Activated B cell treated with CpG ODN at 0.5 μM for 24 hours (primary cell): ENCODE measurements at regions of chr19 and their contacts with region 1.

Region 1: DNA sequence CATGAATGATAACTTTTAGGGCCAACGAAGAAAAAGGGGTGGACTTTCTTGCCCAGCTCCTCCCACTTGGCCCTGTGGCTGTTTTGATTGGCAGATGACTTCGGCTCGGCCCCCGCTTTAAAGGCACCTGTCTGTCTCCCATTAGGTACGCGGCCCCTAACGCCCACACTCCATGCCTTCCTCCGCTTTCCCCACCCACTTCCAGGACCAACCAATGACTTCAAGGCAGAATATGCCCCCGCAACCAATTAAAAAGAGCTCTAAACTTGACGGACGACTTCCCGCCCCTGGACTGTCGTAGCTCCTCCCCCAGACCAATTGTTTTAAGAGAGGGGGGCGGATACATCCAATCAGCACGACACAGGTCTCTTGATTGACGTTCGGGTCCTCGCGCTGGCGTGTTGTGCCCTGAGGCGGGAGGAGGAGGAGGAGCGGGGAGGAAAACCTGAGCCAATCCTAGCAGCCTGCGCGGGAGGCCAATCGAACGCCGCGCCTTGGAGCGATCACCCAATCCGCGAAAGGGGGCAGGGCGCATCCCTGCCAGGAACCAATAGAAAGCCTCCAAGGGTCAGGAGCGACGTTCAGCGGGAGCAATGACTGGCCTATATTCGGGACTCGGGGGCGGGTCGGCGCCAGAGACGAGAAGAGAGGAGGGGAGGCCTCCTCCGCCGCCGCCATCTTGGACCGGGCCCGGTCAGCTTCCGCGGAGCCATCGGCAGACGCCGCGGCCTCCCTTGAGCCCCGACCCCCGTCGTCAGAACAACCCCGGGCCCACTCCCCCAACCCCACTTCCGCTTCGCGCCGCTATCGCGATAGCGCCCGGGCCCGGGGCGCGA is at the start of gene CNOT3:
- DNase-seq: peak; percentile 92
- ATAC-seq: peak; percentile 80
- H3K4me3 Mint-ChIP-seq: peak within 1 kb of the TSS; percentile 85
- H3K27ac Mint-ChIP-seq: peak within 1 kb of the TSS; percentile 90
- H3K4me1 Mint-ChIP-seq: peaks cover 51% of the 10 kb centered on the region
- H3K27me3 Mint-ChIP-seq: no peaks in the 10 kb centered on the region
- CTCF ChIP-seq: no peak
- total RNA-seq, gene CNOT3: 53.2 and 64.6 TPM in 2 replicates

Region 2: GRCh38 chr19:53844849-53845246 is 292.5 kb before region 1 on chr19:
- CTCF ChIA-PET with region 1: no interaction called
- POLR2A ChIA-PET with region 1: no interaction called
- intact Hi-C with region 1: loop called (anchors 1 kb)
- DNase-seq: no peak
- ATAC-seq: no peak
- H3K4me3 Mint-ChIP-seq: no peak overlapping the region
- H3K27ac Mint-ChIP-seq: no peak overlapping the region
- H3K4me1 Mint-ChIP-seq: peaks cover 7% of the 10 kb centered on the region
- H3K27me3 Mint-ChIP-seq: peaks cover 20% of the 10 kb centered on the region
- CTCF ChIP-seq: no peak

Region 3: GRCh38 chr19:54102421-54103169 is 34.7 kb before region 1 on chr19 and contains the start of gene NDUFA3:
- CTCF ChIA-PET with region 1: no interaction called
- POLR2A ChIA-PET with region 1: interaction called, 22 read pairs
- intact Hi-C with region 1: loop called (anchors 1 kb)
- DNase-seq: peak; percentile 93
- ATAC-seq: peak; percentile 97
- H3K4me3 Mint-ChIP-seq: peak within 1 kb of the TSS; percentile 99
- H3K27ac Mint-ChIP-seq: peak within 1 kb of the TSS; percentile 93
- H3K4me1 Mint-ChIP-seq: peaks cover 15% of the 10 kb centered on the region
- H3K27me3 Mint-ChIP-seq: no peaks in the 10 kb centered on the region
- CTCF ChIP-seq: no peak
- total RNA-seq, gene NDUFA3: 94.7 and 96.1 TPM in 2 replicates

Region 4: GRCh38 chr19:54152265-54152664 is 15.0 kb after region 1 on chr19:
- CTCF ChIA-PET with region 1: no interaction called
- POLR2A ChIA-PET with region 1: interaction called, 69 read pairs
- intact Hi-C with region 1: no loop called
- DNase-seq: no peak
- ATAC-seq: no peak
- H3K4me3 Mint-ChIP-seq: no peak overlapping the region
- H3K27ac Mint-ChIP-seq: no peak overlapping the region
- H3K4me1 Mint-ChIP-seq: peaks cover 2% of the 10 kb centered on the region
- H3K27me3 Mint-ChIP-seq: no peaks in the 10 kb centered on the region
- CTCF ChIP-seq: no peak

Region 5: GRCh38 chr19:54203151-54203611 is 65.9 kb after region 1 on chr19:
- CTCF ChIA-PET with region 1: no interaction called
- POLR2A ChIA-PET with region 1: interaction called, 30 read pairs
- intact Hi-C with region 1: loop called (anchors 2 kb)
- DNase-seq: no peak
- ATAC-seq: no peak
- H3K4me3 Mint-ChIP-seq: peak overlapping the region; percentile 100
- H3K27ac Mint-ChIP-seq: peak overlapping the region; percentile 24
- H3K4me1 Mint-ChIP-seq: peaks cover 82% of the 10 kb centered on the region
- H3K27me3 Mint-ChIP-seq: no peaks in the 10 kb centered on the region
- CTCF ChIP-seq: no peak

Region 6: GRCh38 chr19:55385740-55386529 is 1248.6 kb after region 1 on chr19 and contains the start of gene RPL28:
- CTCF ChIA-PET with region 1: no interaction called
- POLR2A ChIA-PET with region 1: no interaction called
- intact Hi-C with region 1: loop called (anchors 1 kb)
- DNase-seq: peak; percentile 95
- ATAC-seq: peak; percentile 79
- H3K4me3 Mint-ChIP-seq: peak within 1 kb of the TSS; percentile 100
- H3K27ac Mint-ChIP-seq: peak within 1 kb of the TSS; percentile 99
- H3K4me1 Mint-ChIP-seq: peaks cover 67% of the 10 kb centered on the region
- H3K27me3 Mint-ChIP-seq: no peaks in the 10 kb centered on the region
- CTCF ChIP-seq: no peak
- total RNA-seq, gene RPL28: 3,790 and 4,042 TPM in 2 replicates